ENCODE measurements at regions of chr1 and their contacts with region 1.

Region 1: GRCh38 chr1:203267347-203267846 is 37.9 kb upstream of the BTG2 start:
- DNase-seq: peak; percentile 98
- H3K4me3 Mint-ChIP-seq: peak overlapping the region; percentile 77
- H3K27ac Mint-ChIP-seq: no peak overlapping the region
- H3K4me1 Mint-ChIP-seq: peaks cover 12% of the 10 kb centered on the region
- H3K27me3 Mint-ChIP-seq: peaks cover 14% of the 10 kb centered on the region
- CTCF ChIP-seq: peak; percentile 99

Region 2: DNA sequence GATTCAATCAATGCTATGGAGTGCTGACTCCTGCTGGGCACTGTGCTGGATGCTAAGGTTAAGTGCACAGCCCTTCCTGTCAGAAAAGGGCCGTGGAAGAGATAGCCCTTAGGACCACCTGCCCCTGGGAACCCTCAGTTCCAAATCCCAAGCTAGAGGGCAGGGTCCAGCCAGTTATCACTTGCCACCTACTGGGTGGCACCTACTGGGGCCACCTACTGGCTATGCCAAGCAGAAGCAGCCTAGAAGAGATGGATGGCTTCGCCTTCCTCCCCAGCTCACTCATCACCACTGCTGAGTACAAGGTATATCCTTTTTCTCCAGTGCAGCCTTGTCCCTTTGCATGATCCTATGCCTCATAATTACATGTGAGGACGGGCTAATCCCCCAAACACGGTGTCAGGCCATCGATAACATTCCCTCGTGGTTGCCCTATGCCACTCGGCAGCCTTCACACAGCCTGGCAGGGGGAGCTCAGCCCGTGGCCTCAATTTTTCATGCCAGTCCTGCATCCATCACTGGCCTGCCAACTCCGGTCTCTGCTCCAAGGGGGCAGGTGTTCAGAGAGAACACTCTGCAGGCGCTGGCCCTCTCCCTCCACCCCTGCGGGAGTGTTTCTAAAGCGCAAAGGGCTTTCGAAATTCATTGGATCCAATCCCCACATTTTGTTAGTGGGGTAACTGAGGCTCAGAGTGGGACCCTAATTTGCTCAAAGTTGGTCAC is 606.1 kb before region 1 on chr1:
- CTCF ChIA-PET with region 1: no interaction called
- POLR2A ChIA-PET with region 1: no interaction called
- intact Hi-C with region 1: no loop called
- DNase-seq: peak; percentile 42
- H3K4me3 Mint-ChIP-seq: no peak overlapping the region
- H3K27ac Mint-ChIP-seq: no peak overlapping the region
- H3K4me1 Mint-ChIP-seq: no peaks in the 10 kb centered on the region
- H3K27me3 Mint-ChIP-seq: peaks cover 76% of the 10 kb centered on the region
- CTCF ChIP-seq: peak; percentile 59

Region 3: DNA sequence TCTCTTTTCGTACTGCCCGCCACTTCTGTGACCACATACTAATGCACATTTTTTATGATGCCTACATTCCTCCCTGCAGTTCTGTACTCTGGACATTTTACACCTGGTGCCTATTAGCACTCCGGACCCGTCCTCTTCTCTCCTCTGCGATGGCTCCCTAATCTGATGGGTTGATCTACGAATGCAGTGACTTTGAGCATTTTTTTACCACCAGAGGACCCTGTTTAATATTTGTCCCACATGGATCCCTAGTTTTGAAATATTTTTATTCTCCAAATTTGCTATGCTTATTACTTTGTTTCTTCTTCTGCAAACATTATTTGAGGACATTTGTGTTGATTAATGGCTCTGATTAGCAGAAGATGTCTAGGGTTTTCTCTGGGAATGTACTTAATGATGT is 235.9 kb before region 1 on chr1:
- CTCF ChIA-PET with region 1: interaction called, 408 read pairs
- POLR2A ChIA-PET with region 1: no interaction called
- intact Hi-C with region 1: no loop called
- DNase-seq: no peak
- H3K4me3 Mint-ChIP-seq: no peak overlapping the region
- H3K27ac Mint-ChIP-seq: no peak overlapping the region
- H3K4me1 Mint-ChIP-seq: no peaks in the 10 kb centered on the region
- H3K27me3 Mint-ChIP-seq: peaks cover 11% of the 10 kb centered on the region
- CTCF ChIP-seq: peak; percentile 20

Region 4: DNA sequence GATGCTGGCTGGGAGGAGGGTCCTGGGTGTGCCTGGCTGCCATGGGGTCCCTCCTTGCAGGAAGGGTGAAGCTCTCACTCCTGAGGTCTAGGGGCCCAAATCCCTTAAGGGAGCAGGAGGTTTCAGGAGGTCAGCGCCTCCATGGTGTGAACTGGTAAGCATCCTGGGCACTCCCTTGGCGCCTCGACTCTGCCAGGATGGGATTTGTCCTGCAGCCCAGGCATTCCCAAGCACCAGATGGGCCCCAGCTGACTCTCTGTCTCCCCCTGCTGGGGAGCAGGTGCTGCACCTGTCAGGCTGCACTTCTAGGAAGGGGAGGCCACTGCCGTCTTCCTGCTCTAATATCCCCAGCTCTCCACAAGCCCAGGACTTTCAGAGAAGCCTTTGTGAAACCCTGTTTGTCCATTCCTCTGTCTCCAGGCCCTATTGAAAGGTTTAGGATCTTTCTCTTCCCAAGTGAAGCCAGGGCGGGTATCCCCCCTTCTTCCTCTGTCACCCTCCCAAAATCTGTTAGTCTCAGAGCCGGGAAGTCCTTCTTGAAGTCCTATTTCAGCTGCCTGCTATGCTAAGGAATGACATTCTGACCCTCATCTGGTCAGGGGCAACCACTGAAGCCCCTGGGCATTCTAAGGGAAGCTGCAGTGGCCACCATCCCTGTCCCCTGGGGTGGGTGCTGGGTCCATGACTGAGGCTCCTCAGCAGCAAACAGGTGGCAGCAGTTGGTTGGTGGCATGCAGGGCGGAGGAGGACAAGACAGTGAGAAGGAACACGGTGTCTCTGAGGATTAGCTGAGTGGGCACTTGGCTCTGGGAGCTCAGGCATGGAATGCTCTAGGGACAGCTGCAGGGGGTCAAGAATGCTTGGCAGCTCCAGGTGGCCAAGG is 95.0 kb before region 1 on chr1:
- CTCF ChIA-PET with region 1: interaction called, 8 read pairs
- POLR2A ChIA-PET with region 1: no interaction called
- intact Hi-C with region 1: loop called (anchors 2 kb)
- DNase-seq: peak; percentile 89
- H3K4me3 Mint-ChIP-seq: no peak overlapping the region
- H3K27ac Mint-ChIP-seq: no peak overlapping the region
- H3K4me1 Mint-ChIP-seq: peaks cover 2% of the 10 kb centered on the region
- H3K27me3 Mint-ChIP-seq: peaks cover 18% of the 10 kb centered on the region
- CTCF ChIP-seq: peak; percentile 100

Region 5: DNA sequence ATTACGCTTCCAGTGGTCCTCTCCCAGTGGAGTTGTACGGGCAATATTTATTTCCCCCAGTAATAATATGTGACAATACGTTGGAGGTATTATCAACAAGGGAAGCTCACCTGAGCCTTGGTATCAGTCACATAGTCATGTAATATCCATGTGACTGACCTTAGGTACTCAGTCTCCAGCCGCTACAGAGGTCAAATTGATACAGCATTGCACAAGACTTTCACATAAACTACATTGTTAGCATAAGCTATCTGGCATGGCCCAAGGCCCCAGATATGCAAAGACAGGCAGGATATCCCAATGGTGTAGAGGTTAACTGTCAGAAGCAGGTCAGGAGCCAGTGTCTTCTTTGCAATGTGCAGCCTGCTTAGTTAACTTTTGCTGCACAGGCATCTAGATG is 22.6 kb before region 1 on chr1:
- CTCF ChIA-PET with region 1: interaction called, 24 read pairs
- POLR2A ChIA-PET with region 1: interaction called, 19 read pairs
- intact Hi-C with region 1: no loop called
- DNase-seq: no peak
- H3K4me3 Mint-ChIP-seq: no peak overlapping the region
- H3K27ac Mint-ChIP-seq: no peak overlapping the region
- H3K4me1 Mint-ChIP-seq: no peaks in the 10 kb centered on the region
- H3K27me3 Mint-ChIP-seq: peaks cover 88% of the 10 kb centered on the region
- CTCF ChIP-seq: no peak

Region 6: GRCh38 chr1:203340112-203340804 is 72.9 kb after region 1 on chr1:
- CTCF ChIA-PET with region 1: interaction called, 980 read pairs
- POLR2A ChIA-PET with region 1: interaction called, 23 read pairs
- intact Hi-C with region 1: loop called (anchors 1 kb)
- DNase-seq: peak; percentile 92
- H3K4me3 Mint-ChIP-seq: no peak overlapping the region
- H3K27ac Mint-ChIP-seq: no peak overlapping the region
- H3K4me1 Mint-ChIP-seq: peaks cover 6% of the 10 kb centered on the region
- H3K27me3 Mint-ChIP-seq: peaks cover 56% of the 10 kb centered on the region
- CTCF ChIP-seq: peak; percentile 95

Region 7: DNA sequence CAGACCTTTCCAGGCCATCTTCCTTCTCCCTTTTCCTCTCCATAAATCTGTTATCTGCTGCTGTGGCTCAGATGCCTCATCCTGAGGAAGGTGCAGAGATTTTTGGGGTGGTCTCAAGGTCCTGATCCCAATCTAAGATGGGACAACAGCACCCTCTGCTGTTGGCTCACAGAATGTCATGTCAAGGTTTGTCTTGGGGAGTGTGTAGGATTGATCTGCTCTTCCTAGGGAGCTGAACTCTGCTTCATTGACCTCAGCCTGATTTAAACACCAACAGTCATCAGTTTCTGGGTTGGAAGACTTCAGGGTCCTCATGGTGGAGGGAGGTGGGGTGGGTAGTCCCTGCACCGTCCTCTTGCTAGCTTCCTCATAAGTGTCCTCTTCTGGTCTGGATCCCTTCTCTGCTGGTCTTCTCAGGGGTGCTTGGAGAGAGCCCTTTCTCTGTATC is 434.8 kb after region 1 on chr1:
- CTCF ChIA-PET with region 1: interaction called, 27 read pairs
- POLR2A ChIA-PET with region 1: no interaction called
- intact Hi-C with region 1: loop called (anchors 1 kb)
- DNase-seq: peak; percentile 83
- H3K4me3 Mint-ChIP-seq: no peak overlapping the region
- H3K27ac Mint-ChIP-seq: no peak overlapping the region
- H3K4me1 Mint-ChIP-seq: peaks cover 16% of the 10 kb centered on the region
- H3K27me3 Mint-ChIP-seq: no peaks in the 10 kb centered on the region
- CTCF ChIP-seq: peak; percentile 100

Measured in MCF 10A (cell line).